Cardiac septum (tissue), 1 donor: ENCODE measurements at regions of chr7 and their contacts with region 1.

Region 1: GRCh38 chr7:100132697-100133151 is 6.0 kb downstream of the MBLAC1 start:
- DNase-seq: peak; percentile 79

Region 2: DNA sequence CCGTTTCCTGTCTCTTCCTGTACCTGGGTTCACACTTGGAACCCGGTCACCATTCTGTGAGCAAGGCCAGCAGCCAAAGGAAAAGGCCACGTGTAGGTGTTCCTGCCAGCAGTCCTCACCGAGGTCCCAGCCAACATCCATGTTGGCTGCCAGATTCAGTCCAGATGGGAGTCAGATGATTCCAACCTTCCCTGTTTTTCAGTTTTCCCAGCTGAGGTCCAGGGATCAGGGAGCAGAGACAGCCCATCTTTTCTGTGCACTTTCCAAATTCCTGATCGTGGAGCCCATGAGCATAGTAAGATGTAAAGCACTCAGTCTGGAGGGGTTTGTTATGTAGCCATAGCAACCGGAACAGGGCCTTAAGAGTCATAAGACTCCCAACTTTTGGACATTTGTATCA is 83.2 kb after region 1 on chr7:
- intact Hi-C with region 1: loop called (anchors 2 kb)
- DNase-seq: no peak

Region 3: DNA sequence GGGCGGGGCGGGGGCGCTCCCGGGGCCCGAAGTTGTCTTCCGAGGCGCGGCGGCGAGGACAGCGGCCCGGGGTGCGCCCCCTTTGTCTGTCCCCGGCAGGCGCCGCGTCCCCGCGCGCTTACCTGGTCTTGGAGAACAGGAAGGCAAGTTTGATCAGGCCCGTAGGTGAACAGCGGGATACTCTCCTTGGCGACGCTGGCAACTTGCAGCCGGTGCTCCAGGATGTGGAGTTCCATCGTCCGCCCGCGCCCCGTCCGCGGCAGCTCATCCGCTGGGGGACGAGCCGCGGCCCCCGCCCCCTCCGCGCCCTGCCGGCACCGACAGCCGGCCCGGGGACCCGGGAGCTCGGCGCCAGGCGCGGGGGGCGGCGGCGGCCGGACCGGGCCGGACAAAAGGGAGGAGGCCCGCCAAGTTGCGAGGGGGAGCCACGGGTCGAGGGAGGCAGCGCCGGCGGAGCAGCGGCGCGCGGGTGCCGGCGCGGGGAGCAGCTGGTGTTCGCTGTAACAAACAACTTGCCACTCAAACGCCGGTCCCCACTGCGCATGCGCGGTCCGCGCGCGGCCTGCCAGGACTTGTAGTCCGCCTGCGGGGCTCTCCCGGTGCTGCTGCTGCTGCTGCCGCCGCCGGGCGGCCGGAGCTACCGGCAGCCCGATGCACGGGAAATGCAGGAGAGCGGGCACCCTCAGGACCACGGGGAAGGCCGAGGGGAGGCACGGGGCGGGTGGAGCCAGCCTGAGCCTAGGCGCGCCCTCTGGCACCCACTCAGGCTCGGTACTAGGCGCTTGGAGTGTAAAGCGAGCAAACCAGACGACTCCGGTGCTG is 139.2 kb after region 1 on chr7:
- intact Hi-C with region 1: no loop called
- DNase-seq: peak; percentile 100

Region 4: GRCh38 chr7:100342765-100343164 is 210.0 kb after region 1 on chr7:
- intact Hi-C with region 1: loop called (anchors 10 kb)
- DNase-seq: no peak

Region 5: GRCh38 chr7:100655908-100656674 is 523.4 kb after region 1 on chr7 and contains the start of gene ACTL6B:
- intact Hi-C with region 1: no loop called
- DNase-seq: no peak
- total RNA-seq, gene ACTL6B: not detected